ENCODE measurements at regions of chr17 and their contacts with region 1.

Region 1: DNA sequence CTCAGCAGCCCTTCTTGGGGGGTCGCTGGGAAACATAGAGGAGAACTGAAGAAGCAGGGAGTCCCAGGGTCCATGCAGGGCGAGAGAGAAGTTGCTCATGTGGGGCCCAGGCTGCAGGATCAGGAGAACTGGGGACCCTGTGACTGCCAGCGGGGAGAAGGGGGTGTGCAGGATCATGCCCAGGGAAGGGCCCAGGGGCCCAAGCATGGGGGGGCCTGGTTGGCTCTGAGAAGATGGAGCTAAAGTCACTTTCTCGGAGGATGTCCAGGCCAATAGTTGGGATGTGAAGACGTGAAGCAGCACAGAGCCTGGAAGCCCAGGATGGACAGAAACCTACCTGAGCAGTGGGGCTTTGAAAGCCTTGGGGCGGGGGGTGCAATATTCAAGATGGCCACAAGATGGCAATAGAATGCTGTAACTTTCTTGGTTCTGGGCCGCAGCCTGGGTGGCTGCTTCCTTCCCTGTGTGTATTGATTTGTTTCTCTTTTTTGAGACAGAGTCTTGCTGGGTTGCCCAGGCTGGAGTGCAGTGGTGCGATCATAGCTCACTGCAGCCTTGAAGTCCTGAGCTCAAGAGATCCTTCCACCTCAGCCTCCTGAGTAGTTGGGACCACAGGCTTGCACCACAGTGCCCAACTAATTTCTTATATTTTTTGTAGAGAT is 3.4 kb downstream of the STH start:
- DNase-seq: peak; percentile 75
- ATAC-seq: peak; percentile 76
- H3K4me3 ChIP-seq: peak overlapping the region; percentile 13 to 67 (median 39); a peak in 5 of 6 replicates
- H3K27ac ChIP-seq: no peak overlapping the region
- H3K4me1 ChIP-seq: peaks cover 43% of the 10 kb centered on the region
- H3K27me3 ChIP-seq: 0 out of 5 replicates have a peak, but pooled peaks cover 0 to 1% of the 10 kb centered on the region in 2 experiments
- CTCF ChIP-seq: peak; percentile 98
- EP300 ChIP-seq: 0 out of 4 replicates have a peak, but pooled peaks of 1 of the 2 experiments have one; percentile 55
- POLR2A ChIP-seq: no peak
- RAD21 ChIP-seq: peak; percentile 97

Region 2: DNA sequence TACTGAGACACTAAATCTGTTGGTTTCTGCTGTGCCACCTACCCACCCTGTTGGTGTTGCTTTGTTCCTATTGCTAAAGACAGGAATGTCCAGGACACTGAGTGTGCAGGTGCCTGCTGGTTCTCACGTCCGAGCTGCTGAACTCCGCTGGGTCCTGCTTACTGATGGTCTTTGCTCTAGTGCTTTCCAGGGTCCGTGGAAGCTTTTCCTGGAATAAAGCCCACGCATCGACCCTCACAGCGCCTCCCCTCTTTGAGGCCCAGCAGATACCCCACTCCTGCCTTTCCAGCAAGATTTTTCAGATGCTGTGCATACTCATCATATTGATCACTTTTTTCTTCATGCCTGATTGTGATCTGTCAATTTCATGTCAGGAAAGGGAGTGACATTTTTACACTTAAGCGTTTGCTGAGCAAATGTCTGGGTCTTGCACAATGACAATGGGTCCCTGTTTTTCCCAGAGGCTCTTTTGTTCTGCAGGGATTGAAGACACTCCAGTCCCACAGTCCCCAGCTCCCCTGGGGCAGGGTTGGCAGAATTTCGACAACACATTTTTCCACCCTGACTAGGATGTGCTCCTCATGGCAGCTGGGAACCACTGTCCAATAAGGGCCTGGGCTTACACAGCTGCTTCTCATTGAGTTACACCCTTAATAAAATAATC is 11.2 kb after region 1 on chr17:
- CTCF ChIA-PET with region 1: no interaction called
- POLR2A ChIA-PET with region 1: interaction called, 15 read pairs
- in situ Hi-C with region 1: no loop called
- intact Hi-C with region 1: loop called (anchors 1 kb)
- DNase-seq: peak; percentile 82
- ATAC-seq: peak; percentile 63
- H3K4me3 ChIP-seq: peak overlapping the region; percentile 6 to 46 (median 18); a peak in 3 of 6 replicates
- H3K27ac ChIP-seq: peak overlapping the region; percentile 39
- H3K4me1 ChIP-seq: peaks cover 49% of the 10 kb centered on the region
- H3K27me3 ChIP-seq: no peaks in the 10 kb centered on the region; a peak in 2 of 5 replicates
- CTCF ChIP-seq: peak; percentile 21; the same call in 1 of the 2 replicates
- EP300 ChIP-seq: no peak; a peak in 1 of 4 replicates
- POLR2A ChIP-seq: no peak
- RAD21 ChIP-seq: no peak

Region 3: DNA sequence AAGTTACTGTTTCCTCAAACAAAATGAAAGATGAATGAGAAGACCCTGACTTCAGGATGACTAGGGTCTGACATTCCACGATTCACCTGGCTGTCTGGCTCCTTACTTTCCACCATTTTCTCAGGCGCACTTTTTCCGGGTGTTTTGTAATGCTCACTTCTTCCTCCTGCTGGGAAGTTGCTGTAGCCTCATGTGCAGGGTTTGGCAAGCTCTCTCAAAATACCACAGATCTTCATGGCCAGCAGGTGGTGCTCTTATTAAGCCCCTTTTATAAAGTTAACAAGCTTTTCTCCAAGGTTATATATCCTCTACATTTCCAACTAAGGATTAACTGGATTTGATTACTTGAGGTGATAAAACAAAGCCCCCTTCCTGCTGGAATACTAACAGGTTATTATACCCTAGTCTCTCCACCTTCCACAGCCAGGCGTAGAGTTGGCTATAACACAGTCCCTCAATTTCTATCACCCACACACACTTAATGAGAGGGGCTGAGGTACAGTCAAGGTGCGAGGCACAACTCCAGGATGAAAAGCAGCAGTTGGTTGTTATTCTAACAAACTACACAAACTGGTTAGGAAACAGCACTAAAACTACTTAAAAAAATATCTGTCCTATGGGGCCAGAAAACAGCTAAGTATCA is 42.0 kb after region 1 on chr17:
- CTCF ChIA-PET with region 1: interaction called, 37 read pairs
- POLR2A ChIA-PET with region 1: no interaction called
- in situ Hi-C with region 1: loop called (anchors 5 kb)
- intact Hi-C with region 1: loop called (anchors 1 kb)
- DNase-seq: peak; percentile 83
- ATAC-seq: peak; percentile 83
- H3K4me3 ChIP-seq: no peak overlapping the region
- H3K27ac ChIP-seq: no peak overlapping the region
- H3K4me1 ChIP-seq: peaks cover 12% of the 10 kb centered on the region; the same call in 1 of the 2 replicates
- H3K27me3 ChIP-seq: no peaks in the 10 kb centered on the region
- CTCF ChIP-seq: peak; percentile 78
- EP300 ChIP-seq: no peak
- POLR2A ChIP-seq: no peak
- RAD21 ChIP-seq: peak; percentile 67; the same call in 1 of the 2 replicates

Region 4: DNA sequence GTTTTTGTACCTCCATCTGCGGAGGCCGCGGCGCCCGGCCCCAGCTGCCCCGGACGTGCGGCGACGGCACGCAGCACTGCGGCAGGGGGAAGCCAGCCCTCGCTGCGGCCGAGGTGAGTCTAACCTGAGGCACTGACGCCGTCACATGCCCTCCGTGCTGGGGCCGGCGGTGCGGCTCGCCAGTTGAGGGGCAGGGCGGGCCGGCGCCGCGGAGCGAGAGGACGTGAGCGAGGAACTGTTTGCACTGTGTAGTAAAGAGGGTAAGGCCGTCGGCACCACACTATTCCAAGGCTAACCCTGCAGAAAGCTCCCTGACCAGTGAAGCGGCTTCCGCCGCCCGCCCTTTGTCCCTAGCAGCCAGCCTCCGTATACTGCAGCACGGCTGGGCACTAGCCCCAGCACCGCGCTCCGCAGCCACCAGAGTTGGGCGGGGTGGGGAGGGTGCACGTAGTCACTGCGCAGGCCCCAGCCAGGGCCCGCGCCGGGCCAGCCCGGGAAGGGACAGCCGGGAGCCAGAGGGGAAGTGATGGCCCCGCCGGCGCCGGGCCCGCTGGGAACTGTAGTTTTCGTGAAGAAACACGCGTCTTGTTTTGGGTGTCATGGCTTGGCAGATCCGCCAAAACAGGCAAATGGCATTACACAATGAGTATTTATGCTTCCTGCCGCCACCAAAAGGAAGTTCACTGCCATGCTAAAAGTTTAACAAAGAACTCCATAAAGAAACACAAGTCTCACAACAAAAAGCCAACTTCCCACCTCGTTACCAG is 191.4 kb after region 1 on chr17:
- CTCF ChIA-PET with region 1: interaction called, 3 read pairs
- POLR2A ChIA-PET with region 1: interaction called, 11 read pairs
- in situ Hi-C with region 1: no loop called
- intact Hi-C with region 1: loop called (anchors 1 kb)
- DNase-seq: peak; percentile 94
- ATAC-seq: peak; percentile 98
- H3K4me3 ChIP-seq: peak overlapping the region; percentile 84 to 98 (median 94)
- H3K27ac ChIP-seq: peak overlapping the region; percentile 96
- H3K4me1 ChIP-seq: peaks cover 46% of the 10 kb centered on the region
- H3K27me3 ChIP-seq: no peaks in the 10 kb centered on the region; a peak in 1 of 5 replicates
- CTCF ChIP-seq: peak; percentile 27
- EP300 ChIP-seq: peak in 1 of 2 experiments; percentile 25; a peak in 1 of 4 replicates
- POLR2A ChIP-seq: peak; percentile 93 to 95
- RAD21 ChIP-seq: no peak; the same call in none of the 2 replicates

Region 5: GRCh38 chr17:46212634-46213435 is 210.4 kb after region 1 on chr17:
- CTCF ChIA-PET with region 1: interaction called, 16 read pairs
- POLR2A ChIA-PET with region 1: interaction called, 3 read pairs
- in situ Hi-C with region 1: loop called (anchors 5 kb)
- intact Hi-C with region 1: loop called (anchors 1 kb)
- DNase-seq: peak; percentile 76
- ATAC-seq: peak; percentile 79
- H3K4me3 ChIP-seq: no peak overlapping the region
- H3K27ac ChIP-seq: no peak overlapping the region
- H3K4me1 ChIP-seq: no peaks in the 10 kb centered on the region
- H3K27me3 ChIP-seq: no peaks in the 10 kb centered on the region
- CTCF ChIP-seq: peak; percentile 80
- EP300 ChIP-seq: no peak
- POLR2A ChIP-seq: no peak
- RAD21 ChIP-seq: peak; percentile 72

Region 6: DNA sequence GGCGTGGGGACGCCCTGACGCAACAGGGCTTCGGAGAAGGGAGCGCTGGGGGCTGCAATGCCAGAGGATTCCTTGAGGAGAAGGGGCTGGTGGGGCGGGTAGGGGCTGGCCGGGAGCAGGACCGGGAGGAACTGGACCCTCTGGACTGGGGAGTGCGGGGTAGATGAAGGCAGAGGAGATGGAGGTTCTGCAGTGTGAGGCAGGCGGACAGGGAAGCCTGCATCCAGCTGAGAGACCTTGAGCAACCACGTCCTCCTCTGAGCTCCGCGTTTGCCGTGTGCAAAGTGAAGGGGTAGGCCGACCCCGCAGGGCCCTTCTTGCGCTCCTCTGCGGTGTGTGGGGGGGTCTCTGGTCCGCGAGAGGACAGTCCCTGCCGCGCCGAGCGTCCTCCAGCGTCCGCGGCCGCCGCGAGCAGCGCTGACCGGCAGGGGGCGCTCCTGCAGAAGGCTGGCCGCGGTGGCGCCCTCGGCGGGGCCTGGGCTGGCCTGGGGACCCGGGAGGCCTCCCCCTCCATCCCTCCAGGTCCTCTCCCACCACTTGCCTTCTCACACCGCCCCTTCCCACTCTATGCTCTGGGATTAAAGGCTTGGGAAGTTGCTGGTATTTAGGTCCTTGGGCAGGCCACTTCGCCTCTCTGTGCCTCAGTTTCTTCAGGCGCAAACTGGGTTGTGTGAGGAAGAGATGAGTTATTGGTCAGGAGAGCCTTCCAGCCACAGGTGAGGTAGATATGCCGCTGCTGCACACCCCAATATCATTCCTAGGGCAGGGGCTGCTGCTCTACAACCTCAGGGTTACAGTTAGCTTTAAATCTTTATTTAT is 839.3 kb after region 1 on chr17:
- CTCF ChIA-PET with region 1: no interaction called
- POLR2A ChIA-PET with region 1: no interaction called
- in situ Hi-C with region 1: loop called (anchors 25 kb)
- intact Hi-C with region 1: no loop called
- DNase-seq: no peak
- ATAC-seq: peak; percentile 92
- H3K4me3 ChIP-seq: peak overlapping the region in 2 of 3 experiments; percentile 12 to 68; a peak in 2 of 6 replicates
- H3K27ac ChIP-seq: no peak overlapping the region
- H3K4me1 ChIP-seq: peaks cover 22% of the 10 kb centered on the region
- H3K27me3 ChIP-seq: peaks cover 0 to 10% of the 10 kb centered on the region in 2 experiments; a peak in 3 of 5 replicates
- CTCF ChIP-seq: peak; percentile 95
- EP300 ChIP-seq: no peak
- POLR2A ChIP-seq: no peak
- RAD21 ChIP-seq: peak; percentile 97

Measured in HepG2 (cell line).